Naive thymus-derived CD8-positive, alpha-beta T cell (primary cell): ENCODE measurements at regions of chr1 and their contacts with region 1.

Region 1: GRCh38 chr1:32286763-32287162 is 5.1 kb upstream of the HDAC1 start:
- DNase-seq: no peak
- ATAC-seq: no peak
- H3K4me3 Mint-ChIP-seq: peak overlapping the region in 3 of 10 donors; percentile 6 to 41 (median 12)
- H3K27ac Mint-ChIP-seq: peak overlapping the region in 8 of 10 donors; percentile 2 to 78 (median 44)
- H3K4me1 Mint-ChIP-seq: peaks cover 3 to 17% (median 11%) of the 10 kb centered on the region in 4 donors
- H3K27me3 Mint-ChIP-seq: no peaks in the 10 kb centered on the region

Region 2: GRCh38 chr1:31663622-31664452 is 622.9 kb before region 1 on chr1:
- POLR2A ChIA-PET with region 1: no interaction called
- DNase-seq: peak in 9 of 10 donors; percentile 29 to 72 (median 56)
- ATAC-seq: peak; percentile 55 to 63
- H3K4me3 Mint-ChIP-seq: no peak overlapping the region
- H3K27ac Mint-ChIP-seq: peak overlapping the region in 1 of 10 donors; percentile 1
- H3K4me1 Mint-ChIP-seq: peaks cover 0 to 4% (median 0%) of the 10 kb centered on the region in 4 donors
- H3K27me3 Mint-ChIP-seq: peaks cover 0 to 6% (median 0%) of the 10 kb centered on the region in 5 donors

Region 3: DNA sequence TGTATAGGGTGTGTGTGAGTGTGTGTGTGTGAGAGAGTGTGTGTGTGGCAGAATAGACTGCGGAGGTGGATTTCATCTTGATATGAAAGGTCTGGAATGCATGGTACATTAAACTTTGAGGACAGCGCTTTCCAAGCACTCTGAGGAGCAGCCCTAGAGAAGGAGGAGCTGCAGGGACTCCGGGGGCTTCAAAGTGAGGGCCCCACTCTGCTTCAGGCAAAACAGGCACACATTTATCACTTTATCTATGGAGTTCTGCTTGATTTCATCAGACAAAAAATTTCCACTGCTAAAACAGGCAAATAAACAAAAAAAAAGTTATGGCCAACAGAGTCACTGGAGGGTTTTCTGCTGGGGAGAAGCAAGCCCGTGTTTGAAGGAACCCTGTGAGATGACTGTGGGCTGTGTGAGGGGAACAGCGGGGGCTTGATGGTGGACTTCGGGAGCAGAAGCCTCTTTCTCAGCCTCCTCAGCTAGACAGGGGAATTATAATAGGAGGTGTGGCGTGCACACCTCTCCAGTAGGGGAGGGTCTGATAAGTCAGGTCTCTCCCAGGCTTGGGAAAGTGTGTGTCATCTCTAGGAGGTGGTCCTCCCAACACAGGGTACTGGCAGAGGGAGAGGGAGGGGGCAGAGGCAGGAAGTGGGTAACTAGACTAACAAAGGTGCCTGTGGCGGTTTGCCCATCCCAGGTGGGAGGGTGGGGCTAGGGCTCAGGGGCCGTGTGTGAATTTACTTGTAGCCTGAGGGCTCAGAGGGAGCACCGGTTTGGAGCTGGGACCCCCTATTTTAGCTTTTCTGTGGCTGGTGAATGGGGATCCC is 13.2 kb before region 1 on chr1:
- POLR2A ChIA-PET with region 1: interaction called, 2,080 read pairs
- DNase-seq: peak; percentile 68 to 96 (median 86)
- ATAC-seq: peak; percentile 80 to 95
- H3K4me3 Mint-ChIP-seq: peak overlapping the region; percentile 78 to 95 (median 86)
- H3K27ac Mint-ChIP-seq: peak overlapping the region; percentile 94 to 100 (median 97)
- H3K4me1 Mint-ChIP-seq: peaks cover 44 to 81% (median 71%) of the 10 kb centered on the region in 4 donors
- H3K27me3 Mint-ChIP-seq: peaks cover 0 to 3% (median 0%) of the 10 kb centered on the region in 5 donors

Region 4: DNA sequence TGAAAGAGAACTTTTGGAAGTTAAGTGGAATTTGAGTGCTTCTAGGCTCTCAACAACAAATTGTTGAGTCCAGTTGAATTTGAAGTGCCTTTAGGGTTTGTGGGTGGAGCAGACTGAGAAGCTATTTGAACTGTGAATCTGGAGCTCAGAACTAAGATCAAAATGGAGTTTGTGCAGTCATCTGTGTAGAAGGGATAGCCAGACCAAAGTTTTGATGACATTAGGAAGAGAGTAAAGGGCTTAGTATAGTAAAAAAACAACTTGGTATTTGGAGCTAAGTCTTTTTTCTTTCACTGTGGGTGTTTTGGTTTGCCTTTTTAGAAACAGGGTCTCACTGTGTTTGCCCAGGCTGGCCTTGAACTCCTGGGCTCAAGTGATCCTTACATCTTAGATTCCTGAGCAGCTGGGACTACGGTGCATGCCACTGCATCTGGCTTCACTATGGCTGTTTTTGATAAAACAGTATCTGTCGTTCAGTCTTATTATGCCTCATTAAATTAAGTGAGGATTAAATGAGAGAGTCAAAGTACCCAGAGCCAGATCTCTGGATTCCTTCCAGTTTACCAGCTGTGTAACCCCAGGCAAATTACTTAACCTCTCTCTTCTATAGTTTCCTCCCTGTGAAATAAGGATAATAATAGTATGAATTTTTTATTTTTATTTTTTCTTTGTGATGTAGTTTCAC is 25.1 kb after region 1 on chr1:
- POLR2A ChIA-PET with region 1: no interaction called
- DNase-seq: no peak
- ATAC-seq: no peak
- H3K4me3 Mint-ChIP-seq: peak overlapping the region in 1 of 10 donors; percentile 2
- H3K27ac Mint-ChIP-seq: peak overlapping the region; percentile 15 to 88 (median 80)
- H3K4me1 Mint-ChIP-seq: peaks cover 29 to 69% (median 62%) of the 10 kb centered on the region in 4 donors
- H3K27me3 Mint-ChIP-seq: no peaks in the 10 kb centered on the region

Region 5: GRCh38 chr1:32345289-32345827 is 58.6 kb after region 1 on chr1:
- POLR2A ChIA-PET with region 1: no interaction called
- DNase-seq: peak in 7 of 10 donors; percentile 26 to 74 (median 46)
- ATAC-seq: peak; percentile 86 to 89
- H3K4me3 Mint-ChIP-seq: peak overlapping the region in 7 of 10 donors; percentile 14 to 70 (median 49)
- H3K27ac Mint-ChIP-seq: peak overlapping the region in 9 of 10 donors; percentile 19 to 93 (median 72)
- H3K4me1 Mint-ChIP-seq: peaks cover 27 to 55% (median 48%) of the 10 kb centered on the region in 4 donors
- H3K27me3 Mint-ChIP-seq: no peaks in the 10 kb centered on the region